ENCODE measurements at regions of chr16 and their contacts with region 1.

Region 1: DNA sequence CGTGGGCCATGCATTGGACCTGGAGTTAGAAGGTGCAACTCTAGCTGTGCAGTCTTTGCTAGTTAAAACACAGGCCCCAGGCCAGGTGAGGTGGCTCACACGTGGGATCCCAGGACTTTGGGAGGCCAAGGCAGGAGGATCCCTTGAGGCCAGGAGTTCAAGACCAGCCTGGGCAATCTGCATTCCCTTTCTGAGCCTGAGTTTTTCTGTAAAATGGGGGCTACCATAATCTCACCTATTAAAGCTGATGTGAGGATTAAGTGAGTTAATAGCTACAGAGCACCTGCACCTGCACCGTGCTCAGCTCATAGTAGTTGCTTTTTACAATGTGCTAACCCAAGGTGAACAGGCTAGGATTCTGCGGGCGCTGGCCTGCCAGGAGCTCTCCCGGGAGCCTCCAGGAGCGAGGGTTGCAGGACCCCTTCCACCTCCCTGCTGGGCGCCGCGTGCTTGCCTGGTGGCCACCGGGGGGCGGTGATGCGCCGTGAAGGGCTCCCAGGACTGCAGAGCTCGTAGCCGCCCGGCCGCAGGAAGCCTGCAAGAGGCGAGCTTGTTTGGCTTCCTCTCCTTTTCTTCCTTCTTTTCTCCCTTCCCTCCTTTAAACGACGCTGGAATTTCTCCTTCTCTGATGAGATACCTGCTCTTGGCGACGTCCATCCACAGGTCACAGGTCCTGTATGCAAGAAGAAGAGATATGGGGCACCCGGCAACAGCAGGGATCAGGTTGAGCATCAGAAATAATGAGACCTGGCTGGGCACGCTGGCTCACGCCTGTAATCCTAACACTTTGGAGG is 51.3 kb downstream of the ZFP90 start:
- DNase-seq: peak; percentile 69
- H3K4me3 ChIP-seq: no peak overlapping the region
- H3K27ac ChIP-seq: no peak overlapping the region
- H3K4me1 ChIP-seq: no peaks in the 10 kb centered on the region
- H3K27me3 ChIP-seq: no peaks in the 10 kb centered on the region
- CTCF ChIP-seq: peak; percentile 87 to 97

Region 2: GRCh38 chr16:68436581-68436980 is 153.8 kb before region 1 on chr16:
- CTCF ChIA-PET with region 1: no interaction called
- dilution Hi-C with region 1: no loop called
- in situ Hi-C with region 1: no loop called
- intact Hi-C with region 1: no loop called
- DNase-seq: no peak
- H3K4me3 ChIP-seq: no peak overlapping the region
- H3K27ac ChIP-seq: no peak overlapping the region
- H3K4me1 ChIP-seq: no peaks in the 10 kb centered on the region
- H3K27me3 ChIP-seq: peaks cover 3% of the 10 kb centered on the region
- CTCF ChIP-seq: peak; percentile 29 to 34

Region 3: DNA sequence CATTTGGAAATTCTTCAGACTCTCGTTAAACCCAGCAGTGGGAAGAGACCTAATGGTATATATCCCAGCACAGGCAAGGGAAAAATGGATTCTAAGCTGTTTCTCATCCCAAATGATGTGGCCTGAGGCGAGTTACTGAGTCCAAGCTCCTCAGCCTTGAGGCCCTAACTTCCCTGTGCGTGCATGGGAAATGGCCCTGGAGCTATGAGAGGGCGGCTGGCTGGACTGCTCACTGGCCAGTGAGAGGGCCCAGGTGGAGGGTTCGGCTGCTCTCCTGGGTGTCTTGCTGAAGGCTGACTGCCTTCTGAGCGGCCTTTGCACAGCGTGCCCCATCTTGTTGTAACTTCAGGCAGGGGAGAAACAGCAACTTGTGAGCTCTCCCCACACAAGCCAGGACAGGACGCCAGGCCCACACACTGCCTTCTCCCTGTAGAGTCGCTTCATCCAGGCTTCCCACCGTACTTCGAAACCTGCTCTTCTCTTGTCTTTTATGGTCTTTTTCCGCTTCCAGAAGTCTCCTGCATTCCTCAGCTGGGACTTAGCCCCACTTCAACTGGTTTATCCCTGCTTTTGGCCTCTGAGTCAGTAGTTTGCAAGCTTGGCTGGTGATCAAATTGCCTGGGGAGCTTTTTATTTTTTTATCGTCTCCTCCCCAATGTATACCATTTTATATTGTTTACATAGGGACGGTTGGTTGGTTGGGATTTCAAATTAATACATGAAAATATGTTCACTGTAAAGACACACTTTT is 68.0 kb after region 1 on chr16:
- CTCF ChIA-PET with region 1: interaction called, 13 read pairs
- dilution Hi-C with region 1: no loop called
- in situ Hi-C with region 1: no loop called
- intact Hi-C with region 1: no loop called
- DNase-seq: peak; percentile 99
- H3K4me3 ChIP-seq: no peak overlapping the region
- H3K27ac ChIP-seq: peak overlapping the region; percentile 99
- H3K4me1 ChIP-seq: peaks cover 64% of the 10 kb centered on the region
- H3K27me3 ChIP-seq: no peaks in the 10 kb centered on the region
- CTCF ChIP-seq: no peak

Region 4: DNA sequence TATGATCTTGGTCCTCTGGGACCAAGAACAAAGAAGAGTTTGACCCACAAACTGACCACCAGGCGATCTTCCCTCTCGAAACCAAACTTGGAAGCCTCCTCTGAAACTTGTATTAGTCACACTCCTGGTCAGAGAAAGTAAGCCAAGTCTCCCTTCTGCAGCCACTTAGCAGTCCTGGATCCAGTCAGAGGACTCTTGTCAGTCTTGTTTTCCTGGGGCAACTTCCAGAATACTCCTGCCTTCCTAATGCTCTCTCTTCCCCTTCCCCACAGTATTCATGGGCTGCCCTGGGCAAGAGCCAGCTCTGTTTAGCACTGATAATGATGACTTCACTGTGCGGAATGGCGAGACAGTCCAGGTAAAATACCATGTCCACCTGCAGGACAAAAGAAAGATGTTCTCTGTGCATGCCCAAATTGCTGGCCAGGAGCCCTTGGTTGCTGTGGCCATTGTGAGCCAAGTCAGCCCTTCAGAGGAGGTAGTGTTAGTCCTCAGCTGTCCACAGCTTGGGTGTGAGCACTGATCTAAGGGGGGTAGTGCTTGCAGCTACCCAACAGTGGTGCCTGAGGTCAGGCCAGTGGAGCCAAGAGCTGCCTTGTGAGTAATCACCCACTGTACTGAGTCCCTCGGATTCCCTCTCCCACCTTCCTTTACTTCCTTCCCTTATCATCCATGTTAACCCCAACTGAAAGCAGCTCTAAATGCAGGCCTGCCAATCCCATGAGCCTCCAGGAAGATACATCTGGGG is 85.9 kb after region 1 on chr16:
- CTCF ChIA-PET with region 1: interaction called, 4 read pairs
- dilution Hi-C with region 1: no loop called
- in situ Hi-C with region 1: loop called in 1 of 2 experiments (anchors 10 kb)
- intact Hi-C with region 1: no loop called
- DNase-seq: peak; percentile 88
- H3K4me3 ChIP-seq: no peak overlapping the region
- H3K27ac ChIP-seq: peak overlapping the region; percentile 78
- H3K4me1 ChIP-seq: peaks cover 17% of the 10 kb centered on the region
- H3K27me3 ChIP-seq: no peaks in the 10 kb centered on the region
- CTCF ChIP-seq: no peak

Region 5: GRCh38 chr16:68704232-68704867 is 114.0 kb after region 1 on chr16:
- CTCF ChIA-PET with region 1: interaction called, 3 read pairs
- dilution Hi-C with region 1: no loop called
- in situ Hi-C with region 1: no loop called
- intact Hi-C with region 1: loop called (anchors 2 kb)
- DNase-seq: peak; percentile 83
- H3K4me3 ChIP-seq: no peak overlapping the region
- H3K27ac ChIP-seq: no peak overlapping the region
- H3K4me1 ChIP-seq: peaks cover 22% of the 10 kb centered on the region
- H3K27me3 ChIP-seq: no peaks in the 10 kb centered on the region
- CTCF ChIP-seq: peak; percentile 84 to 92

Region 6: DNA sequence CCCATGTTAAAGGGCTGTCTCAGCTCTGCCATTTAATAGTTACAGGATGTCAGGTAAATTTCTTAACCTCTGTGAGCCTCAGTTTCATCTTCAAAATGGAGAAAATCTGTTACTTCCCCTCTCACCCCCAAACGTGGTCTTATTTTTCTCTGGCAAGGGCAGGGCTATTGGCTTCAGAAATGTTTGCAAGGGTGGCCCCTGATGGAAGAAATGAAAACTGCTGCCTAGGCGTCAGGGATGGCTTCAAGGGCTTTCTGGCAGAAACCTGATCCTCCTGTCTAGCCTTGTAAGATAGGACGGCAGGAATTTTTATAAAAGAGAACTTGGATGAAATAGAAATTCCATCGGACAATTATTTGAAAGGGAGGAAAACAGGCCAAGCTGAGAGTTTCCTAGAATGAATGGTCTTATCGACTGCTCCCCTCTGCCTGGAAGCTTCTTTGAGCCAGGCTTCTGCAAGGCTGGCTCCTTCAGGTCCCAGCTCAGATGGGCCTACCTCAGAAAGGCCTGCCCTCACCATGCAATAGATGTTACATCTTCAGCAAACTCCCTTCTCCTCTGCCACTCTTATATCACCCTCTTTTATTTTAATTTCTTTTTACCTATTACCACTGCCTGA is 210.0 kb after region 1 on chr16:
- CTCF ChIA-PET with region 1: interaction called, 3 read pairs
- dilution Hi-C with region 1: no loop called
- in situ Hi-C with region 1: no loop called
- intact Hi-C with region 1: loop called (anchors 2 kb)
- DNase-seq: peak; percentile 80
- H3K4me3 ChIP-seq: no peak overlapping the region
- H3K27ac ChIP-seq: peak overlapping the region; percentile 47
- H3K4me1 ChIP-seq: peaks cover 39% of the 10 kb centered on the region
- H3K27me3 ChIP-seq: no peaks in the 10 kb centered on the region
- CTCF ChIP-seq: peak; percentile 83 to 89